Activated CD4-positive, alpha-beta memory T cell treated with anti-CD3 and anti-CD28 coated beads for 36 hours (primary cell): ENCODE measurements at regions of chr10 and their contacts with region 1.

Region 1: GRCh38 chr10:22988581-22989360 is 60.9 kb downstream of the ARMC3 start:
- DNase-seq: peak; percentile 74
- H3K4me3 Mint-ChIP-seq: no peak overlapping the region
- H3K27ac Mint-ChIP-seq: no peak overlapping the region
- H3K4me1 Mint-ChIP-seq: peaks cover 18% of the 10 kb centered on the region
- H3K27me3 Mint-ChIP-seq: peaks cover 2% of the 10 kb centered on the region

Region 2: DNA sequence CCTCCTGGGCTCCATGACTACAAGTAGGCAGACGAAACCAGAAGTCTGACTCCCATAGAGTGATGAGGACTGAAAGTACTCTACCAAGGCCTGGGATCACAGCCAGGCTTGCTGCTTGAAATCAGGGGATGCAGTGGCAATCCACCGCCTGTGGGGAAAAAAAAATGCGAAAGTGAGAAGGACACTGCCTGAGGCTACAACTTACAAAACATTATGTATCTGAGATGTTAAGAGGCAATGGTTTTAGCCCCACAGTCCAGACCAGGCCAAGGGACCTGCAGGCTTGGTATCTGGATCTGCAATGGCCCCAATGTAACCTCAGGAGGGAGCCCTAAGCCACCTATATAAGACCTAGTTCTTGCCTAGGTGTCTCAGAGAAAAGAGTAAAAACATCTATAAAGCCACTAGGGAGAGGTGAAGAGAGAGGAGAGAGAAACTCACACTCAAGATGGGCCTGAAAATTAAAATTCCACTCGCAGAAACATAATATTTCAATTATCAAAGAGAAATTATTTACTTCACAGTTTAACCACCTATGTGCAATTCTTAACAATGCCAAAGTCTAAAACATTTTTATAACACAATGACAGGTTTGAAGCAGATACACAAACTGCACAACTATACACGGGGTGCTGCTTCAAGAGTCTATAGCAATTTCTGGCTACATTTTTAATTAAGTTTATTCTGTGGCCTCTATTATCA is 999.2 kb before region 1 on chr10:
- CTCF ChIA-PET with region 1: interaction called, 30 read pairs
- POLR2A ChIA-PET with region 1: no interaction called
- intact Hi-C with region 1: no loop called
- DNase-seq: peak; percentile 44
- H3K4me3 Mint-ChIP-seq: no peak overlapping the region
- H3K27ac Mint-ChIP-seq: no peak overlapping the region
- H3K4me1 Mint-ChIP-seq: peaks cover 11% of the 10 kb centered on the region
- H3K27me3 Mint-ChIP-seq: no peaks in the 10 kb centered on the region

Region 3: GRCh38 chr10:22010973-22011408 is 977.8 kb before region 1 on chr10:
- CTCF ChIA-PET with region 1: interaction called, 26 read pairs
- POLR2A ChIA-PET with region 1: no interaction called
- intact Hi-C with region 1: loop called (anchors 1 kb)
- DNase-seq: no peak
- H3K4me3 Mint-ChIP-seq: no peak overlapping the region
- H3K27ac Mint-ChIP-seq: no peak overlapping the region
- H3K4me1 Mint-ChIP-seq: no peaks in the 10 kb centered on the region
- H3K27me3 Mint-ChIP-seq: peaks cover 4% of the 10 kb centered on the region

Region 4: GRCh38 chr10:22259280-22259679 is 729.5 kb before region 1 on chr10:
- CTCF ChIA-PET with region 1: interaction called, 7 read pairs
- POLR2A ChIA-PET with region 1: no interaction called
- intact Hi-C with region 1: loop called (anchors 1 kb)
- DNase-seq: peak; percentile 39
- H3K4me3 Mint-ChIP-seq: no peak overlapping the region
- H3K27ac Mint-ChIP-seq: no peak overlapping the region
- H3K4me1 Mint-ChIP-seq: peaks cover 26% of the 10 kb centered on the region
- H3K27me3 Mint-ChIP-seq: peaks cover 4% of the 10 kb centered on the region

Region 5: DNA sequence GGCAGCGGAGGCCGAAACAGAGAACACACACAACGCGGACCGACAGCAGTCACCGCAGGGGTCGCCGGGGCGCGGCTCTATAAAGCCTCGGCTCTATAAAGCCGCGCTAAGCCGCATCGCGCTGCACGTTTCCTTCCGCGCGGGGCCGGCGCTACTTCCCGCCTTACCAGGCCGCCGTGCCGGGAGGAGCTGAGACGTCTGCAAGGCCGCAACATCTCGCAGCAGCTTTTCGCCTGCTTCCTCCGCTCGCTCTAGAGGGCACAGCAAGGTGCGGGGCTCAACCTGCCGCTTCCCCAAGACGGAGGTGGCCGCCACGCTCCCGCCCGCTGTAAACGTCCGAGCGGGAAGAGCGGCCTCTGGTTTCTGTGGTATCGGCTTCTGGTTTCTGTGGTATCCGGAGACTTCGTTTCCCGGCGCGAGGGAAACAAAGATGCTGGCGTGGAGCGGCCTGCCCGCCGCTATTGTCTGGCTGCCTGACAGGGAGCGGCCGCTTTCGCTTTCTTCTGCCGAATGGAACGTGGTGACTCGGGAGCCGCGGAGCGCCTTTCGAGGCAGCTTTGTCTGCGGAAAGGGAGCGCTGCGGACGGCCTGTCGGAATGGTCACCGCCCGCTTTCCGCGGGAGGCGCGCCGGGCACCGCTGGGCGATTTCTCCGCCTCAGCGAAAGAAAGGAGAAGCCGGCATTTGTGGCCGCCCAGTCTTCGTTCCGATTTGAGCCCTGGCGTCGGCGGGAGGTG is 551.7 kb before region 1 on chr10:
- CTCF ChIA-PET with region 1: no interaction called
- POLR2A ChIA-PET with region 1: no interaction called
- intact Hi-C with region 1: loop called (anchors 5 kb)
- DNase-seq: peak; percentile 89
- H3K4me3 Mint-ChIP-seq: peak overlapping the region; percentile 88
- H3K27ac Mint-ChIP-seq: peak overlapping the region; percentile 91
- H3K4me1 Mint-ChIP-seq: peaks cover 50% of the 10 kb centered on the region
- H3K27me3 Mint-ChIP-seq: no peaks in the 10 kb centered on the region

Region 6: DNA sequence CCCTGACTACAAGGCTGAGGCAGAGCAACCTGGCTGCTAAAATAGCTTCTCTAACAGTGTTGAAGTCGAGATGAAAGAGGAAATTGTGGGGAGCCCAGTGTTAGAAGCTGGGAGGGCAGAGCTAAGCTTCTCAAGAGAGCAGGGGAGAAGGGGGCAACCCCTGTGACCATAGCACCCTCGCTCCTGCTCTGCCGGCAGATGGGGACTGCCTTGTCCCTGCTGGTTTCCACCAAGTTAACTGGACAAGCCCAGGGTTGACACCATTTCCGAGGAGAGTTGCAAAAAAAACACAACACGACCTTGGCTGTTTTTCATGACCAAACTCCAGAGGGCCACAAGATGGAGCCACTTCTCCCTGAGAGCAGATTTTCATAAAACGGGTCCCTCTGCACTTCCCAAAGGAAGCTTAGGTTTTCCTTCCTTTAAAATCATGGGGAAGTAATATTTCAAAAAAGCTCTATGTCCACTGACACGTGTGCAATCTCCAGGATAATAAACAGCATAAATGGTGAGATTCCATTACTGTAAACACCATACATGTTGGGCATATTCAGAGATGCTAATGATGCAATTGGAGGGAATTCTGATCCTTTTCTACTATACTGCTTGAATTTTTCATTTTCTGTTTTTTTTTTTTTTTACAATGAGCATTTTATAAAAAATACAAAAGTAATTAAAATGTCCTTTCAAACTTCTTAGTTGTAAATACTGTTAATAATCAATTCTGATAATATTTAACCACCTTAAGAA is 414.8 kb before region 1 on chr10:
- CTCF ChIA-PET with region 1: interaction called, 58 read pairs
- POLR2A ChIA-PET with region 1: no interaction called
- intact Hi-C with region 1: loop called (anchors 1 kb)
- DNase-seq: peak; percentile 40
- H3K4me3 Mint-ChIP-seq: no peak overlapping the region
- H3K27ac Mint-ChIP-seq: peak overlapping the region; percentile 54
- H3K4me1 Mint-ChIP-seq: peaks cover 56% of the 10 kb centered on the region
- H3K27me3 Mint-ChIP-seq: no peaks in the 10 kb centered on the region

Region 7: GRCh38 chr10:23047201-23048050 is 58.7 kb after region 1 on chr10:
- CTCF ChIA-PET with region 1: no interaction called
- POLR2A ChIA-PET with region 1: no interaction called
- intact Hi-C with region 1: no loop called
- DNase-seq: no peak
- H3K4me3 Mint-ChIP-seq: no peak overlapping the region
- H3K27ac Mint-ChIP-seq: no peak overlapping the region
- H3K4me1 Mint-ChIP-seq: no peaks in the 10 kb centered on the region
- H3K27me3 Mint-ChIP-seq: peaks cover 8% of the 10 kb centered on the region

Region 8: GRCh38 chr10:23067939-23068775 is 79.4 kb after region 1 on chr10:
- CTCF ChIA-PET with region 1: interaction called, 3 read pairs
- POLR2A ChIA-PET with region 1: no interaction called
- intact Hi-C with region 1: loop called (anchors 2 kb)
- DNase-seq: peak; percentile 76
- H3K4me3 Mint-ChIP-seq: no peak overlapping the region
- H3K27ac Mint-ChIP-seq: no peak overlapping the region
- H3K4me1 Mint-ChIP-seq: no peaks in the 10 kb centered on the region
- H3K27me3 Mint-ChIP-seq: peaks cover 1% of the 10 kb centered on the region